ENCODE measurements at regions of chr9 and their contacts with region 1.

Region 1: GRCh38 chr9:19028835-19029451 is 4.1 kb downstream of the SAXO1 start:
- DNase-seq: no peak
- H3K4me3 Mint-ChIP-seq: no peak overlapping the region
- H3K27ac Mint-ChIP-seq: no peak overlapping the region
- H3K4me1 Mint-ChIP-seq: peaks cover 10% of the 10 kb centered on the region
- H3K27me3 Mint-ChIP-seq: peaks cover 15% of the 10 kb centered on the region

Region 2: DNA sequence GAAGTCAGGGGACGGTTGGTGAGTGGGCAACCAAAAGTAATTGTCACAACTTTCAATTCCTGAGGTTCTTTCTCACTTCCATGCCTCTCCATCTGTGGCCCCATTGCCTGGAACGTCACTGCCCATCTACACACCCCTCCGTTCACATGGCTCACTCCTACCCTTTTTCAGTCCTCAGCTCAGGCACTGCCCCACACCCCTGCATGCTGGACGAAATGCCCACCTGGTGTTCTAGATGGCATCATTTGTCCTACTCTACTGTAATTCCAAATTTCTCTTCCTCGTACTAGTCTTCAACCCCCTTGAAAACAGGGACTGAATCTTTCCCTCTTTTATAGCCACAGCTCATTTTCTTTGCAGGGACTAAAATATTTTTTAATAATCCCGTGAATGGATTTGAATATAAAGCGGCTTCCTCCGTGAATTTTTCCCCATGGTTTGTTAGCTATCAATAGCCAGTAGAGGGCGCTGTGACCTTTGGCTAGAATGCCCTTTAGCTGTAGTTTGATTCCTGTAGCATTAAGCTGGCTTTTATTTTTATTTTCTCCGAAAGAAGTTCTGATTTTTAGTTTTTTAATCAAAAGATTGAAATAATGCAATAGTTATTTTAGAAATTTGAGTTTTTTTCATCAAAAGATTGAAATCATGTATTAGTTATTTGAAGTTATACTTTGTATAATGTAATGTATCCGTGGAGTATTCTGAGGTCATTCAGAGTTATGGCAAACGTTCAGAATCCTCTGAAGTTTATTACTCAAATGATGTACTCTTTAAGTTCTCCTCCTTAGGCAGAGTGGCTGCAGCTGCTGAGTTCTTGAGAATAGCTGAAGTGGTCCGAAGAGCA is 1218.0 kb before region 1 on chr9:
- intact Hi-C with region 1: loop called (anchors 10 kb)
- DNase-seq: peak; percentile 9
- H3K4me3 Mint-ChIP-seq: no peak overlapping the region
- H3K27ac Mint-ChIP-seq: no peak overlapping the region
- H3K4me1 Mint-ChIP-seq: no peaks in the 10 kb centered on the region
- H3K27me3 Mint-ChIP-seq: no peaks in the 10 kb centered on the region

Region 3: GRCh38 chr9:18255158-18255629 is 773.7 kb before region 1 on chr9:
- intact Hi-C with region 1: loop called (anchors 1 kb)
- DNase-seq: peak; percentile 48
- H3K4me3 Mint-ChIP-seq: no peak overlapping the region
- H3K27ac Mint-ChIP-seq: no peak overlapping the region
- H3K4me1 Mint-ChIP-seq: peaks cover 7% of the 10 kb centered on the region
- H3K27me3 Mint-ChIP-seq: peaks cover 6% of the 10 kb centered on the region

Region 4: DNA sequence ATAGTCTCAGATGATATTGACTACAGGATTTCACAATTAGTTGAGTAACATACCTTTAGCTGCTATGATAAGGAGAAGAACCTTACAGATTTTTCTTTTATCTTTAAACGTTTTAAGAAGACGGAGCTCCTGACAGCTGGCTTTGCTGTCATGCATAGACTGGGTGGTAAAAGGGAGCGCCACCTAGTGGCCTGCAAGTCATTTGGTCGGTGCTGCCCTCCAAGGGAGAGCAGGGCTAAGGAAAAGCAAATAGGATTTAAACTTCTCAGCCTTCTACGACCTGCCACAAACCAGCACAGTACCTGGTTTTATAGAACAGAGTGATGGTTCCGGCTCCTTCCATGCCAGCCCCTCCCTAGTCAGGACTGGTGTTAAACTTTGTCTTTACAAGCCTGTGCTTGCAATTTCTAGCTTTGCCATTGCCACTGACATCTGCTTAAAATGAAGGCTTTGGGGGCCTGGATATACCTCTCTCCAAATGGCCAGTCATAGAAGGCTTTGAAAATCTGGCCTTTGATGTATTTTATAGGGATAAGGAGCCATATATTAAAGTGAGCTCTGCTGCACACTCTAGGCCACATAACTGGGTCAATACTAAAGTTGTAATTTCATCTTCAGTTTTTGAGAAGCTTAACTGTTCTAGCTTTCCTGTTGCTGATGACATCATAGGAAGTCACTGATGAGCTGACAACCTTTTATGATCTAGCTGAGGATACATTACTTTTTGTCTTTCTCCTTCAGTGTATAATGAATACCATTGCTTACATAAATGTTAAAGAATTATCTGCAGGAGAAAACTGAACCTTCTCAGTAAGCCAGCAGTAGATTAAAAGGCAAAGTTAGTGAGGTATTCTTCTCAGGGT is 586.1 kb before region 1 on chr9:
- intact Hi-C with region 1: loop called (anchors 5 kb)
- DNase-seq: peak; percentile 27
- H3K4me3 Mint-ChIP-seq: no peak overlapping the region
- H3K27ac Mint-ChIP-seq: no peak overlapping the region
- H3K4me1 Mint-ChIP-seq: no peaks in the 10 kb centered on the region
- H3K27me3 Mint-ChIP-seq: peaks cover 12% of the 10 kb centered on the region

Measured in activated T-helper 2 cell treated with anti-CD3 and anti-CD28 coated beads, Interferon-gamma antibody, Interleukin-2, Interleukin-4, amounts not matched to agents 10 μg/mL and 5 μg/mL and 100 μg/mL, durations not matched to agents 14 hours and 24 hours and 36 hours (primary cell).